ENCODE measurements at regions of chr16 and their contacts with region 1.

Region 1: DNA sequence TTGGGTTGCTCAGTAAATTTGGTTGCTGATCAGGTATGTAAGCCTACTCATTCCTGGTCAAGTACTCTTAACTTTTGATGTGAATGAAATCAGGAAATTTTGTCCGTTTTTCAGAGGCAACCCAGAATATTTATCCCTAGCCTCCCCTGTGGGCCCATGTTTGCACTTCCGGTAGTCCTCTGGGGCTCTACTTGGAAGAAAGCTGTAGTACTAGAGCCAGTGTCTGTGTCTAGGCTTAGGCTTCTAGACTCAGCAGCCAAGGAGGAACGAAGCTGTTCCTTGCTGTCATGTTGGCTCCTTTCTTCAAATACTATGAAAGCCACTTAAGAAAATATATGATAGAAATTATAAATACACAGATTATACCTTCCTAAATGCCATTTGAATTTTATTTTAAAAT is 21.2 kb downstream of the ESRP2 start:
- DNase-seq: no peak
- ATAC-seq: no peak
- H3K4me3 Mint-ChIP-seq: no peak overlapping the region
- H3K27ac Mint-ChIP-seq: peak overlapping the region in 9 of 10 donors; percentile 48 to 91 (median 79)
- H3K4me1 Mint-ChIP-seq: peaks cover 5 to 53% (median 41%) of the 10 kb centered on the region in 4 donors
- H3K27me3 Mint-ChIP-seq: no peaks in the 10 kb centered on the region

Region 2: DNA sequence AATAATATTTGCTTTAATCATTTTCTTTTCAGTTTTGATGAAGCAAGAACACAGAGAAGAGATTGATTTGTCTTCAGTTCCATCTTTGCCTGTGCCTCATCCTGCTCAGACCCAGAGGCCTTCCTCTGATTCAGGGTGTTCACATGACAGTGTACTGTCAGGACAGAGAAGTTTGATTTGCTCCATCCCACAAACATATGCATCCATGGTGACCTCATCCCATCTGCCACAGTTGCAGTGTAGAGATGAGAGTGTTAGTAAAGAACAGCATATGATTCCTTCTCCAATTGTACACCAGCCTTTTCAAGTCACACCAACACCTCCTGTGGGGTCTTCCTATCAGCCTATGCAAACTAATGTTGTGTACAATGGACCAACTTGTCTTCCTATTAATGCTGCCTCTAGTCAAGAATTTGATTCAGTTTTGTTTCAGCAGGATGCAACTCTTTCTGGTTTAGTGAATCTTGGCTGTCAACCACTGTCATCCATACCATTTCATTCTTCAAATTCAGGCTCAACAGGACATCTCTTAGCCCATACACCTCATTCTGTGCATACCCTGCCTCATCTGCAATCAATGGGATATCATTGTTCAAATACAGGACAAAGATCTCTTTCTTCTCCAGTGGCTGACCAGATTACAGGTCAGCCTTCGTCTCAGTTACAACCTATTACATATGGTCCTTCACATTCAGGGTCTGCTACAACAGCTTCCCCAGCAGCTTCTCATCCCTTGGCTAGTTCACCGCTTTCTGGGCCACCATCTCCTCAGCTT is 23.8 kb before region 1 on chr16:
- POLR2A ChIA-PET with region 1: no interaction called
- DNase-seq: no peak
- ATAC-seq: no peak
- H3K4me3 Mint-ChIP-seq: peak overlapping the region in 1 of 10 donors; percentile 50
- H3K27ac Mint-ChIP-seq: peak overlapping the region in 8 of 10 donors; percentile 15 to 87 (median 44)
- H3K4me1 Mint-ChIP-seq: peaks cover 2 to 18% (median 5%) of the 10 kb centered on the region in 4 donors
- H3K27me3 Mint-ChIP-seq: no peaks in the 10 kb centered on the region

Region 3: GRCh38 chr16:68229431-68230198 is 14.9 kb after region 1 on chr16:
- POLR2A ChIA-PET with region 1: interaction called, 11 read pairs
- DNase-seq: peak in 6 of 10 donors; percentile 31 to 66 (median 60)
- ATAC-seq: peak; percentile 17 to 20
- H3K4me3 Mint-ChIP-seq: no peak overlapping the region
- H3K27ac Mint-ChIP-seq: peak overlapping the region; percentile 7 to 87 (median 62)
- H3K4me1 Mint-ChIP-seq: peaks cover 20 to 50% (median 46%) of the 10 kb centered on the region in 4 donors
- H3K27me3 Mint-ChIP-seq: no peaks in the 10 kb centered on the region